PC-9 (cell line): ENCODE measurements at regions of chr2 and their contacts with region 1.

Region 1: GRCh38 chr2:55026202-55026601 is 24.0 kb downstream of the RTN4 start:
- DNase-seq: no peak
- H3K4me3 ChIP-seq: no peak overlapping the region
- H3K27ac ChIP-seq: peak overlapping the region; percentile 7; the same call in 1 of the 2 replicates
- H3K4me1 ChIP-seq: peaks cover 24% of the 10 kb centered on the region
- H3K27me3 ChIP-seq: no peaks in the 10 kb centered on the region
- CTCF ChIP-seq: no peak

Region 2: GRCh38 chr2:54673501-54673998 is 352.7 kb before region 1 on chr2:
- CTCF ChIA-PET with region 1: no interaction called
- POLR2A ChIA-PET with region 1: no interaction called
- intact Hi-C with region 1: no loop called
- DNase-seq: peak in 1 of 2 experiments; percentile 60
- H3K4me3 ChIP-seq: no peak overlapping the region
- H3K27ac ChIP-seq: peak overlapping the region; percentile 58
- H3K4me1 ChIP-seq: peaks cover 31% of the 10 kb centered on the region
- H3K27me3 ChIP-seq: no peaks in the 10 kb centered on the region
- CTCF ChIP-seq: no peak

Region 3: GRCh38 chr2:55063713-55064323 is 37.6 kb after region 1 on chr2:
- CTCF ChIA-PET with region 1: no interaction called
- POLR2A ChIA-PET with region 1: no interaction called
- intact Hi-C with region 1: no loop called
- DNase-seq: no peak
- H3K4me3 ChIP-seq: no peak overlapping the region
- H3K27ac ChIP-seq: no peak overlapping the region
- H3K4me1 ChIP-seq: no peaks in the 10 kb centered on the region
- H3K27me3 ChIP-seq: no peaks in the 10 kb centered on the region
- CTCF ChIP-seq: no peak

Region 4: DNA sequence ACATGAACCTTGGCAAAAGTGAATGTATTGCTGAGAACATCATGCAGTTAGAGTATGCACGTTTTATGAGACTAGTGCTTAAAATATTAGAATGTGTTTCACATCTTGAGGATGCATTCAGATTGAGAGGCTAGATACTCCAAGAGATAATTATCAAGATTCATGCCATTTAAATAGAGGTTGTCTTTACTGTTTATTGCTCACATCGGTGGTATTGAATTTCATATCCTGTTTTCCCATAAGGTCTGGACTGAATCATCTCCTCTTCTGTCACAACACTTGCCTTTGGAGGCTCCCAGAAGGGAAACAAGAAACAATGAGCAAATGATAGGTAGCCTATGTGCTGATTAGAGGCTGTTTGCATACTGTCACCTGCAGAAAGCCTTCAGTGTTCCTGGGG is 122.1 kb after region 1 on chr2:
- CTCF ChIA-PET with region 1: interaction called, 10 read pairs
- POLR2A ChIA-PET with region 1: no interaction called
- intact Hi-C with region 1: no loop called
- DNase-seq: peak; percentile 21 to 99
- H3K4me3 ChIP-seq: no peak overlapping the region
- H3K27ac ChIP-seq: peak overlapping the region; percentile 81
- H3K4me1 ChIP-seq: peaks cover 39% of the 10 kb centered on the region
- H3K27me3 ChIP-seq: no peaks in the 10 kb centered on the region
- CTCF ChIP-seq: no peak